Ovary (tissue), 10 donors: ENCODE measurements at regions of chr5 and their contacts with region 1.

Region 1: DNA sequence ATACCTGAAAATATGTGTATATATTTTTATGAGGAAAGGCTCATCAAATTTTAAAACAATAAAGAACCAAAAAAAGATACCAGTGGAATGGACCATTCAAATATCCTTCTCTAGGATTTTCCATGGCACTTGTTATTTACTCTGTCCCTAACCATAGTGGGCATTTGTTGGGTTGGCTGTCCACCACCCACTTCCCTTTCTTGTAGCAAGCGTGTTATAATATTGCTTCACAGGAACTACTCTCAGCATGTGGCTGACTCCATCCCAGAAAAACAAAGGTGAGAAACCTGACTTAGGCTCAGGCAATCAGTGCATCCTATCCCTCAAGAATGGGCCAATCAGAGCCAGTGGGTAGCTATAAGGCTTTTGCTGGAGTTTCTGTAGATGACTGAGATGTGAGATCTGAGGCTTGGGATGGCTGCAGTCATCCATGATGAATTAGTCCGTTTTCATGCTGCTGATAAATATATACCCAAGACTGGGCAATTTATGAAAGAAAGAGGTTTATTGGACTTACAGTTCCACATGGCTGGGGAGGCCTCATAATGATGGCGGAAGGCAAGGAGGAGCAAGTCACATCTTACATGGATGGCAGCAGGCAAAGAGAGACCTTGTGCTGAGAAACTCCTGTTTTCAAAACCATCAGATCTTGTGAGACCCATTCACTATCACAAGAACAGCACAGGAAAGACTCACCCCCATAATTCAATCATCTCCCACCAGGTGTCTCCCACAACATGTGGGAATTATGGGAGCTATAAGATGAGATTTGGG is 17.2 kb downstream of the C5orf63 start:
- DNase-seq: no peak
- H3K4me3 ChIP-seq: no peak overlapping the region
- H3K27ac ChIP-seq: no peak overlapping the region
- H3K4me1 ChIP-seq: no peaks in the 10 kb centered on the region
- H3K27me3 ChIP-seq: no peaks in the 10 kb centered on the region
- CTCF ChIP-seq: no peak
- EP300 ChIP-seq: no peak
- POLR2A ChIP-seq: no peak

Region 2: DNA sequence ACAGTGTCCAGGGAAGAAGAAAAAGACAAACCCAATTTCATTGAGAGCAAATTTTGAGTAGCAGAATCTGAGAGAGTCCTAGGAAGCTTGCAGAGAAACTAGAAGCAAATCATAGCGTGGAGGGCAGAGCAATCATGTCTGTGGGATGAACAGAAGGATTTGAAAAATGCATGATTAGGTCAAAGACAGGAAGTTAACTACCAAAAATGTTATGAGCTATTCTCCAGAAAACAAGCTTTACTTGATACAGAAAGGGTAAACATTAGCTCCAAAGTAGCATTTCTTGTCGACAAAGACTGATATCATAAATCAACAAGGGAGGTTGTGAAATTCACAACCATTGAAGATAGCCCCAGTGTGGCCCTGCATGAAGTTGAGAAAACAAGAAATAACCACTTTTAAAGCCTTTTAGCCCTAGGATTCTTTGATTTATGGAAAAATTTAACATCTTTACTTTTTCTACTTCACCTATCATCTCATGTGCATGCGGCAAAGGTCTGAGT is 136.8 kb after region 1 on chr5:
- intact Hi-C with region 1: loop called in 1 of 4 experiments (anchors 5 kb)
- DNase-seq: no peak
- H3K4me3 ChIP-seq: no peak overlapping the region
- H3K27ac ChIP-seq: no peak overlapping the region
- H3K4me1 ChIP-seq: no peaks in the 10 kb centered on the region
- H3K27me3 ChIP-seq: no peaks in the 10 kb centered on the region
- CTCF ChIP-seq: no peak
- EP300 ChIP-seq: no peak
- POLR2A ChIP-seq: no peak